Mammary epithelial cell (primary cell): ENCODE measurements at regions of chr2 and their contacts with region 1.

Region 1: GRCh38 chr2:136932700-136933099 is 167.4 kb downstream of the THSD7B start:
- DNase-seq: peak; percentile 14
- H3K4me3 ChIP-seq: no peak overlapping the region
- H3K27ac ChIP-seq: no peak overlapping the region
- H3K4me1 ChIP-seq: no peaks in the 10 kb centered on the region
- H3K27me3 ChIP-seq: no peaks in the 10 kb centered on the region
- CTCF ChIP-seq: peak; percentile 63 to 82

Region 2: DNA sequence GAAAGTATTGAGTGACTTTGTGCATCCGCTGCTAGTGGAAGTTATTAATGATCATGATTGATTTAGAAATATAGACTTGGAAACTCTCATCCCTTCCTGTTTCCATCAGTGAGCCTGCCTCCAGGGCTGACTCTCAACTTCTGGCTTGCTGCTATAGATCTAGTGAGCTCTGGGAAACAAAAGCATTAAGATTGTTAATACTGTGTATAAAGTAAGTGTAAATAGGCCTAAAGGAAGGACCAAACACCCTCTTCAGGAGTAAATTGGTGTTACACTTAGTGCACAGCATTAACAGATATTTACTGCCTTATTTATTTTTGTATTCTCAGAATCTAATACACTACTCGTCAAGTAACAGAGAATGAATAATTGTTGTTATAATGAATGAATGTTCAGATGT is 118.2 kb after region 1 on chr2:
- CTCF ChIA-PET with region 1: no interaction called
- dilution Hi-C with region 1: no loop called
- in situ Hi-C with region 1: no loop called
- intact Hi-C with region 1: loop called (anchors 1 kb)
- DNase-seq: no peak
- H3K4me3 ChIP-seq: no peak overlapping the region
- H3K27ac ChIP-seq: no peak overlapping the region
- H3K4me1 ChIP-seq: no peaks in the 10 kb centered on the region
- H3K27me3 ChIP-seq: no peaks in the 10 kb centered on the region
- CTCF ChIP-seq: peak; percentile 37 to 53

Region 3: GRCh38 chr2:137467246-137467862 is 534.7 kb after region 1 on chr2:
- CTCF ChIA-PET with region 1: no interaction called
- dilution Hi-C with region 1: no loop called
- in situ Hi-C with region 1: no loop called
- intact Hi-C with region 1: loop called (anchors 1 kb)
- DNase-seq: peak; percentile 48
- H3K4me3 ChIP-seq: no peak overlapping the region
- H3K27ac ChIP-seq: no peak overlapping the region
- H3K4me1 ChIP-seq: no peaks in the 10 kb centered on the region
- H3K27me3 ChIP-seq: peaks cover 2% of the 10 kb centered on the region
- CTCF ChIP-seq: peak; percentile 77 to 87

Region 4: GRCh38 chr2:137677463-137677862 is 744.8 kb after region 1 on chr2:
- CTCF ChIA-PET with region 1: no interaction called
- dilution Hi-C with region 1: no loop called
- in situ Hi-C with region 1: no loop called
- intact Hi-C with region 1: loop called (anchors 5 kb)
- DNase-seq: no peak
- H3K4me3 ChIP-seq: no peak overlapping the region
- H3K27ac ChIP-seq: no peak overlapping the region
- H3K4me1 ChIP-seq: no peaks in the 10 kb centered on the region
- H3K27me3 ChIP-seq: no peaks in the 10 kb centered on the region
- CTCF ChIP-seq: peak in 1 of 2 donors; percentile 16